WTC11 (cell line): ENCODE measurements at regions of chr1 and their contacts with region 1.

Region 1: DNA sequence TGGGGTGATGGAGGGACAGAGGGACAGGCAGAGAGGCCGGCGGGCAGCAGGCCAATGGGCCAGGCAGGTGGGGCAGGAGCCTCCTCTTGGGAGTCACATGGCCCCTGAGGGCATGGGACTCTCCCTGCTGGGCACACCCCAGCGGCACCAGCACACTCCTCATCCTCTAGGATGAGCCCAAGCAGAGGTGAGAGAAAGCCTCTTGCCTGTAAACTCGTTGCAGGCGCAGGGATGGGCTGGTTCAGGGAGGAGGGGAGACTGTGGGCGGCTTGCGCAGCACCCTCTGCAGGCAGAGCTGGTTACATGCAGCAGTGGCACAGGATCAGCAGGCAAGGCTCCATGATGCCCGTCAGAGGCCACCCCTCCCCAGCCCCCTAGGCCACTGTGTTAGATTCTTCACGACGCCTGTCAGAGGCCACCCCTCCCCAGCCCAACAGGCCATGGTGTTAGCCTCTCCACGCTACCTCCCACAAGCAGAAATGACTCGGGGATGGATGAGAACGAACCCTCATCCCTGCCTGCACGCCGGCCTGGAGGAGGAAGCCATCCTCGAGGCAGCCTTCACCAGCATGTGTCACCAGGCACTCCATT is 209.7 kb upstream of the VAMP3 start:
- DNase-seq: peak; percentile 84
- ATAC-seq: peak; percentile 99
- H3K4me3 Mint-ChIP-seq: no peak overlapping the region
- H3K27ac Mint-ChIP-seq: no peak overlapping the region
- H3K4me1 Mint-ChIP-seq: 0 out of 2 replicates have a peak, but pooled peaks cover 3% of the 10 kb centered on the region
- H3K27me3 Mint-ChIP-seq: no peaks in the 10 kb centered on the region; the same call in 1 of the 2 replicates
- CTCF ChIP-seq: peak; percentile 30; the same call in 1 of the 2 replicates

Region 2: DNA sequence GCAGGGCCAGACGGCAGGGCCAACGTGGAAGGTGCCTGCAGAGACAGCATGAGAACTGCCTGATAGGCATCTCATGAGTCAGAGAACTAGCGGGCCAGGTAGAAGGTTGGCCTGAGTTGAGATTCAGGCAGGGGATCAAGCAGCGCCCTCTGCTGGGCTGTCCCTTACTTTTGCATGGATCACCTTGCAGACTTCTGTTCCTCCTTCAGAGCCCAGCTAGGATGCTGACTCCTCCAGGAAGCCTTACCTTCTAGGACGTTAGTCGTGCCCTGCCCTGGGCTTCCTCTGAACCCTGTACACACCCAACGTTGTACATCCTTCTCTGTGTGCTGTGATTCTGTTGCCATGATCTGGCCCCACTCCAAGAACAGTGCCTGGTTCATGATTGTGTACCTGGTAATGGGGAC is 21.7 kb before region 1 on chr1:
- CTCF ChIA-PET with region 1: interaction called, 12 read pairs
- POLR2A ChIA-PET with region 1: no interaction called
- DNase-seq: peak; percentile 88
- ATAC-seq: peak; percentile 62
- H3K4me3 Mint-ChIP-seq: no peak overlapping the region
- H3K27ac Mint-ChIP-seq: no peak overlapping the region
- H3K4me1 Mint-ChIP-seq: peaks cover 50% of the 10 kb centered on the region
- H3K27me3 Mint-ChIP-seq: peaks cover 8% of the 10 kb centered on the region; the same call in 1 of the 2 replicates
- CTCF ChIP-seq: peak; percentile 70

Region 3: DNA sequence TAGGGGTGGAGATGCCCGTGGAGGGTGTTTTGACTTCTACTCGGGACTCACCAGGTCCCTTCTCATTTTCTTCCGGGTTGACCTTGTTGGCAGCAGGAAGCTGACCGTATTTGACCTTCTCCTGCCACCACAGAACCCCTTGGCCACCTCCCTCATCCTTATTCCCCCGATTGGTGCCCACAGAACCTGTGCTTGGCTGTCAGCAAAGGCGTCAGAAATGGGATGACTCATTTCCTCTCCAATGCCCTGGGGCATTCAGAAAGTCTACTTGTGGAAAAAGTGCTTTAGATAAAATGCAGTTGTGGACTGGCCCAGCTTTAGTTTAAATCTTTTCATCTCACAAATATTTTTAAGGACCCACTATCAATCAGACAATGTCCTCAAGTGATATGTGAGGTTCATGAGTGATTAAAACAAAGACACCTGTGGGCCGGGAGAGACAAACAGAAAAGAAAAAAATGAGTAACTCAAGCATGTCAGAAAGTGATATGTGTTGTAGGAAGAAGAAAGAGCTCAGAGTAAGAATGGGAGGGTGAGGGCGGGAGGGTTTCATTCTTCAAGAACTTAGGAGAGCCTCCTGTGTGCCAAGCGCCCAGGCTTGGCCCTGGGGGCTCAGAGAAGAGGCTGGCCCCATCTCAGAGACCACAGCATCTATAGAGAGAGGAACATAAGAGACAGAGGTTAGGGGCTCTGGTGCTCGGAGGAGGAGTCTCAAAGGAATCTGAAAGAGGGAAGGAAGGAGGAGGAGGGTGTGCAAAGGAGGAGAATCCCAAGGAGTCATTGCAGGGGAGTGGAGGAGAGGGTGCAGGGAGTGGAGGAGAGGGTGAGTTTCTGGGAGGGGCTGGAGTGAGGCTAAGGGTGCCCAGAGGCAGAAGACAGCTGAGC is 11.9 kb before region 1 on chr1:
- CTCF ChIA-PET with region 1: interaction called, 23 read pairs
- POLR2A ChIA-PET with region 1: no interaction called
- DNase-seq: no peak
- ATAC-seq: no peak
- H3K4me3 Mint-ChIP-seq: no peak overlapping the region
- H3K27ac Mint-ChIP-seq: no peak overlapping the region
- H3K4me1 Mint-ChIP-seq: peaks cover 23% of the 10 kb centered on the region
- H3K27me3 Mint-ChIP-seq: no peaks in the 10 kb centered on the region
- CTCF ChIP-seq: no peak